ENCODE measurements at regions of chr2 and their contacts with region 1.

Region 1: DNA sequence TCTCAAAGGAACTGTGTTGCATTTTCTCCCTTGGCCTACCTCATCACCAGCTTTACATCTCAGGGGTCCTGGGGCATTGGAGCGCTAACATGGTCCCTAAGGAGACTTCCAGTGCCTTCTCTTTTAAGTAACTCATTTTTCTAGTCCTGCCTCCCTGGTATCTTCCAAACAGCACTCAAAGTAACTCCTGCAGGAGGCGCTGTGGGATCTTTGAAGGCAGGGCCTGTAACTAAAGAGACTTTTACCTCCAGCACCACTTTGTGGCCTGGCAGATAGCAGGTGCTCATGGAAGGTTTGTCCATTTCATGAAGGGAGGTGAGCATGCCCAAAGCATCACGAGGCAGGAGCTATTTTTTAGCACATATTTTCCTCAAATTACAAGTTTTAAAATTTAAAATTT is 411.0 kb upstream of the GYPC start:
- DNase-seq: peak; percentile 34 to 80 (median 49)
- ATAC-seq: peak; percentile 98
- H3K4me3 ChIP-seq: no peak overlapping the region
- H3K27ac ChIP-seq: no peak overlapping the region
- H3K4me1 ChIP-seq: no peaks in the 10 kb centered on the region
- H3K27me3 ChIP-seq: no peaks in the 10 kb centered on the region
- CTCF ChIP-seq: peak; percentile 81 to 90 (median 87)
- EP300 ChIP-seq: no peak
- POLR2A ChIP-seq: no peak
- RAD21 ChIP-seq: peak; percentile 57 to 83

Region 2: GRCh38 chr2:126359494-126359893 is 114.6 kb after region 1 on chr2:
- CTCF ChIA-PET with region 1: no interaction called
- POLR2A ChIA-PET with region 1: no interaction called
- in situ Hi-C with region 1: no loop called
- intact Hi-C with region 1: loop called (anchors 10 kb)
- DNase-seq: peak in 2 of 4 experiments; percentile 15 to 25
- ATAC-seq: peak; percentile 75; the same call in 2 of the 3 replicates
- H3K4me3 ChIP-seq: no peak overlapping the region
- H3K27ac ChIP-seq: no peak overlapping the region
- H3K4me1 ChIP-seq: no peaks in the 10 kb centered on the region
- H3K27me3 ChIP-seq: no peaks in the 10 kb centered on the region
- CTCF ChIP-seq: peak; percentile 8 to 40 (median 29); a peak in 1 of 6 replicates
- EP300 ChIP-seq: no peak
- POLR2A ChIP-seq: no peak
- RAD21 ChIP-seq: peak in 1 of 2 experiments; percentile 23; a peak in 1 of 4 replicates

Region 3: GRCh38 chr2:126482582-126483464 is 237.9 kb after region 1 on chr2:
- CTCF ChIA-PET with region 1: interaction called, 3 read pairs
- POLR2A ChIA-PET with region 1: no interaction called
- in situ Hi-C with region 1: no loop called
- intact Hi-C with region 1: loop called (anchors 1 kb)
- DNase-seq: peak in 2 of 4 experiments; percentile 32 to 55
- ATAC-seq: peak; percentile 95
- H3K4me3 ChIP-seq: no peak overlapping the region
- H3K27ac ChIP-seq: no peak overlapping the region
- H3K4me1 ChIP-seq: no peaks in the 10 kb centered on the region; a peak in 1 of 5 replicates
- H3K27me3 ChIP-seq: 0 out of 5 replicates have a peak, but pooled peaks cover 0 to 5% of the 10 kb centered on the region in 2 experiments
- CTCF ChIP-seq: peak; percentile 53 to 64 (median 56)
- EP300 ChIP-seq: no peak
- POLR2A ChIP-seq: no peak
- RAD21 ChIP-seq: peak; percentile 34 to 62; a peak in 3 of 4 replicates

Measured in K562 (cell line).